ENCODE measurements at regions of chr21 and their contacts with region 1.

Region 1: DNA sequence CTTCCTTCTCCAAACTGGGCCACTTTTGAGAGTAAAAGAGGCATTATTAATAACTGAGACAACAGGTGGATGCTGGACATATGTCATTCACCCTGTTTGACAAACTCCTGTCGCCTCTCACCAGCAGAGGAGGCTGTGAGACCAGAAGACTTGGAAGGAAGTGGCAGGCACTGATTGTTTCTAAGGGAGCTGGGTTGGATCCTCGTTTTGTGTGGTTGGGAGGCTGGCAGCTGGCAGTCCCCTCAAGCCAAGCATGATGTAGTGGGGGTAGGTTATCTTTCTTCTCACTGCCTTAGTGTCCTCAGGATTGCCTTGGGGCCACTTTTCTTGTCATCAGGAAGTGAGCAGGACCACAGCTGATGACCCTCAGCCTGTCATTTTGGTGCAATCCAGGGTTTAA is 86.5 kb upstream of the KCNJ15 start:
- DNase-seq: peak; percentile 66
- H3K4me3 ChIP-seq: no peak overlapping the region
- H3K27ac ChIP-seq: peak overlapping the region; percentile 84
- H3K4me1 ChIP-seq: peaks cover 36% of the 10 kb centered on the region
- H3K27me3 ChIP-seq: no peaks in the 10 kb centered on the region
- CTCF ChIP-seq: peak; percentile 67 to 68
- POLR2A ChIP-seq: no peak

Region 2: DNA sequence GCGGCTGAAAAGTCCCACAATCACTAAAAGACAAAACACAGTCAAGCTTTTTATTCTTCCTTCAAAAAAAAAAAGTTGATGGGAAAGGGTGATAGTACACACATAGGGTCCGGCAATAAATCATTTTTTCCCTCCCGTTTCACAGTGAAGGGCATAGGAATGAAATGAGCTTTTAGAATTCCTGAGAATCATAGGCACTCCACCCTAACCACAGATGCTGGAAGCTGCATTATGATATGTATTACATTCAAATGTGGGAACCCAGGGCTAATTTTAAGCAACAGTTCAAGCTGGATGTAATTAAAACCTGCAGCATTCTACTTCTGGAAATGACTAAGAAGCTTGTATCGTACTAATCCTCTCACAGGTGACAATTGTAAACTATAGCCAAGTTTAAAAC is 10.8 kb after region 1 on chr21:
- CTCF ChIA-PET with region 1: interaction called, 12 read pairs
- POLR2A ChIA-PET with region 1: no interaction called
- dilution Hi-C with region 1: no loop called
- intact Hi-C with region 1: no loop called
- DNase-seq: no peak
- H3K4me3 ChIP-seq: no peak overlapping the region
- H3K27ac ChIP-seq: no peak overlapping the region
- H3K4me1 ChIP-seq: no peaks in the 10 kb centered on the region
- H3K27me3 ChIP-seq: no peaks in the 10 kb centered on the region
- CTCF ChIP-seq: no peak
- POLR2A ChIP-seq: no peak

Region 3: DNA sequence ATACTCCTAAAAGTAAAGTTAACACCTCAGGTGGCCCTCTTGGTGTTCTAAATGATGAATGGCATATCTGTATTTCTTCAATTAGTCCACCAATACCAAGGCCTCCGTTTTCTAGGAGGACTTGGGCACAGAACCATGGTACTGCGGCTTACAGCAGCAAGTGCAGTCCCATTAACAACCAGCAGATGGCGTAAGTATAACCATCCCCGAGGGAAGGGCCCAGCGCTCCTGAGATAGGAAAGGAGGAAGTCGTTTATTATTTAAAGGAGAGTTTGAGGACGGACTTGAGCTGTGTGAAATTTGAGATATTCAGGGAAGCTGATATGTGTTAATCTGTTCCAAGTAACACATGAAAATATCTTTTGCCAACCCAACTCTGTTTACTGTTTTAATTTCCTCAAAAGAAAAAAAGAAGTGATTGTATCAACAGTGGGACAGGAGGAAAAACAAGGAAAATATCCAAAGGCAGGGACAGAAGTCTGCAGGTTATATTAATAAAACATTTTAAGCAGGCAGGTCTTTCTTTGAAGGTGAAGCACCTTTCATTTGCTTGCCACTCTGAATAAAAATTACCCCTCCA is 48.9 kb after region 1 on chr21:
- CTCF ChIA-PET with region 1: interaction called, 39 read pairs
- POLR2A ChIA-PET with region 1: no interaction called
- dilution Hi-C with region 1: no loop called
- intact Hi-C with region 1: loop called (anchors 1 kb)
- DNase-seq: peak; percentile 87
- H3K4me3 ChIP-seq: no peak overlapping the region
- H3K27ac ChIP-seq: no peak overlapping the region
- H3K4me1 ChIP-seq: peaks cover 7% of the 10 kb centered on the region
- H3K27me3 ChIP-seq: no peaks in the 10 kb centered on the region
- CTCF ChIP-seq: peak; percentile 87 to 91
- POLR2A ChIP-seq: no peak

Region 4: GRCh38 chr21:38306433-38307141 is 136.3 kb after region 1 on chr21:
- CTCF ChIA-PET with region 1: interaction called, 17 read pairs
- POLR2A ChIA-PET with region 1: no interaction called
- dilution Hi-C with region 1: no loop called
- intact Hi-C with region 1: loop called (anchors 1 kb)
- DNase-seq: peak; percentile 90
- H3K4me3 ChIP-seq: no peak overlapping the region
- H3K27ac ChIP-seq: peak overlapping the region; percentile 43
- H3K4me1 ChIP-seq: peaks cover 25% of the 10 kb centered on the region
- H3K27me3 ChIP-seq: no peaks in the 10 kb centered on the region
- CTCF ChIP-seq: no peak
- POLR2A ChIP-seq: no peak

Region 5: GRCh38 chr21:38343693-38344092 is 173.4 kb after region 1 on chr21:
- CTCF ChIA-PET with region 1: interaction called, 17 read pairs
- POLR2A ChIA-PET with region 1: no interaction called
- dilution Hi-C with region 1: no loop called
- intact Hi-C with region 1: no loop called
- DNase-seq: peak; percentile 89
- H3K4me3 ChIP-seq: no peak overlapping the region
- H3K27ac ChIP-seq: peak overlapping the region; percentile 40
- H3K4me1 ChIP-seq: peaks cover 15% of the 10 kb centered on the region
- H3K27me3 ChIP-seq: no peaks in the 10 kb centered on the region
- CTCF ChIP-seq: no peak
- POLR2A ChIP-seq: no peak

Measured in endothelial cell of umbilical vein (primary cell).